Activated CD8-positive, alpha-beta T cell treated with anti-CD3 and anti-CD28 coated beads, Interleukin-2, amount 10 ng/mL, durations not matched to agents 7 days and 5 days (primary cell): ENCODE measurements at regions of chr2 and their contacts with region 1.

Region 1: DNA sequence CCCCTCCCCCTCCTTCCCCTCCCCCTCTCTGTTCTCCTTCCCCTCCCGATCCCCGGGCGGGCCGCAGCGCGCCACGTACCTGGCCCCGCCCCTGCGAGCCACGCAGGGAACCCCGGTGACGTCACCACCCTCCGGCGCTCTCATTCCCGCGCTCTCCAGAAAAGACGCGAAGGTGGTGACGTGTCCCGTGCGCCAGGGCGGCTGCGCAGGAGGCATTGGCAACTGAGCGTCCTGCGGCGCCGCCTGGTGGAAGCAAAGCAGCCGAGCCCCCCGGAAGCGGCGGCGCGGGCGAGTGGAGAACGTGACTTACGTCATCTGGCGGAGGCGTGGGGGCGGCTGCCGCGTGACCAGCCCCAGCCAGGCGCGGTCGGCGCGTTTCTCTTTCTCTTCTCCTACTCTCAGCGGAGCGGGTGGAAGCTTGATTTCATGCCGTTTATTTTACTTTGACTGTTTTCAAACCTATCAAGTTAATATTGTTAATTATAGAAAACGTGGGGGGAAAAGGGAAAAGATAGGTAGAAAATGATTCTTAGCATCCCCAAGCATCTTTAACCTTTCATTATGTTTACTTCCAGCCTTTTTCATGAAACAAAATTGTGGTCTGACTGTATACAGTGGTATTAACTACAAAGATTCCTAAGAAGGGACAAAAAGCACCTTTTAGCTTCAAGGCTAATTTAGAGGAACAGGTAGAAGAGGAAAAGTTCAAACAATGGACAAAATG is 48.1 kb downstream of the C2orf42 start:
- DNase-seq: peak; percentile 100
- ATAC-seq: peak; percentile 74
- H3K4me3 Mint-ChIP-seq: peak overlapping the region; percentile 84
- H3K27ac Mint-ChIP-seq: peak overlapping the region; percentile 96
- H3K4me1 Mint-ChIP-seq: peaks cover 76% of the 10 kb centered on the region
- H3K27me3 Mint-ChIP-seq: no peaks in the 10 kb centered on the region

Region 2: DNA sequence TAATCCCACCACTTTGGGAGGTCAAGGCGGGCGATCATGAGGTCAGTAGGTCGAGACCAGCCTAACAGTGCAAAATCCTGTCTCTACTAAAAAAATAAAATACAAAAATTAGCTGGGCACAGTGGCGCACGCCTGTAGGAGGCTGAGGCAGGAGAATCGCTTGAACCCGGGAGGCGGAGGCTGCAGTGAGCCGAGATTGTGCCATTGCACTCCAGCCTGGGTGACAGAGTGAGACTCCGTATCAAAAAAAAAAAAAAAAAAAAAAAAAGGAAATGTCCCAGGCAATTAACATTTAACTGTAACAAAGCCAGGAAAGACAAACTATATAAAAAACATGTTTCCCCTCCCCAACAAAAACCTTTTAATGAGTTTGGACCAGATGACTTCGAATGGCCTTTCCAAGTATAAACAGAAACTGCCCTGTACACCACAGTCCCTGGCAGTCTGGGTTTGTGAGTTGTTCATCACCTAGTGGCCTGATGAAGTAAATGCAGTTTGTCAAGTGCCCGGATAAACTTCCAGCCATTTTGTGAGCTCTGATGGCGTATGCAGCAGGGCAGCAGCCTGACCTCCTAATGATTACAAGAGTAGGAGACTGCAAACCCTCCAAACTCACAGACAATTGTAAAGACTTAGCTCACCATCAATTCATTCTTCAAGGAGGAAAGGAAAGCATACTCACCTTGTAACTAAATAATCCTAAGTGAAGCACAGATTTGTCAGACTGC is 72.0 kb before region 1 on chr2:
- CTCF ChIA-PET with region 1: interaction called, 62 read pairs
- POLR2A ChIA-PET with region 1: interaction called, 15 read pairs
- DNase-seq: peak; percentile 81
- ATAC-seq: peak; percentile 80
- H3K4me3 Mint-ChIP-seq: peak overlapping the region; percentile 57
- H3K27ac Mint-ChIP-seq: peak overlapping the region; percentile 87
- H3K4me1 Mint-ChIP-seq: peaks cover 47% of the 10 kb centered on the region
- H3K27me3 Mint-ChIP-seq: no peaks in the 10 kb centered on the region

Region 3: DNA sequence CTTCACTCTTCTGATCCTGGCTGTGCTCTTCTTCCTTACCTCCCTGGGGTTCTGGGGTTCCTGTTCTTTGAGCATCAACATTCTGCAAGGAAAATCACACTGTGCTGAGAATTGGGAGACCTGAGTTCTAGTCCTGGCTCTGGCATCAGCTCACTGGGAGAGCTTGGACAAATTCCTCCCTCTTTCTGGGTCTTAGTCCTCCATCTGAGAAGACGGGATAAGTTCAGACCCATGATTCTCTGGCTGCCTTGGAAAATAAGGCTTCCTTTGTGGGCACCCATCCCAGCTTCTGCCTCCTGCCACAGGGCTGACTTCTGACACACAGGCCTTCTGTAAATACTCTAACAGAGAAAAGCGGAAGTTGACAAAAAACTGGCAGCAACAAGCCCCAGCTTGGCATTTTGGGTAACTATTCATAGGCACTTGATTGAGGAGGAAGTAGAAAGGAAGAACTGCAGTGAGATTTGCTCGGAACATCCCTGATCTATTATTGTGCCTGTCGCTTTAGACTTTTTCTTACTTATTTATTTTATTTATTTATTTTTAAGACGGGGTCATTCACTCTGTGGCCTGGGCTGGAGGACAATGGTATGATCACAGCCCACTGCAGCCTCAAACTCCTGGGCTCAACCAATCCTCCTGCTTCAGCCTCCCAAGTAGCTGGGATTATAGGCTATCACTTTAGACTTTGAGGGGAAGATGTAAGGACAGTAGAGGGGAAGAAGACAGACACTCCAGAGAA is 47.6 kb before region 1 on chr2:
- CTCF ChIA-PET with region 1: interaction called, 14 read pairs
- POLR2A ChIA-PET with region 1: interaction called, 370 read pairs
- DNase-seq: peak; percentile 74
- ATAC-seq: peak; percentile 72
- H3K4me3 Mint-ChIP-seq: peak overlapping the region; percentile 70
- H3K27ac Mint-ChIP-seq: peak overlapping the region; percentile 84
- H3K4me1 Mint-ChIP-seq: peaks cover 56% of the 10 kb centered on the region
- H3K27me3 Mint-ChIP-seq: no peaks in the 10 kb centered on the region

Region 4: GRCh38 chr2:70115646-70116442 is 26.9 kb before region 1 on chr2:
- CTCF ChIA-PET with region 1: no interaction called
- POLR2A ChIA-PET with region 1: interaction called, 12 read pairs
- DNase-seq: peak; percentile 37
- ATAC-seq: peak; percentile 35
- H3K4me3 Mint-ChIP-seq: peak overlapping the region; percentile 22
- H3K27ac Mint-ChIP-seq: peak overlapping the region; percentile 69
- H3K4me1 Mint-ChIP-seq: peaks cover 58% of the 10 kb centered on the region
- H3K27me3 Mint-ChIP-seq: no peaks in the 10 kb centered on the region

Region 5: GRCh38 chr2:70132244-70133126 is 10.3 kb before region 1 on chr2:
- CTCF ChIA-PET with region 1: interaction called, 28 read pairs
- POLR2A ChIA-PET with region 1: interaction called, 41 read pairs
- DNase-seq: peak; percentile 65
- ATAC-seq: peak; percentile 43
- H3K4me3 Mint-ChIP-seq: peak overlapping the region; percentile 84
- H3K27ac Mint-ChIP-seq: peak overlapping the region; percentile 98
- H3K4me1 Mint-ChIP-seq: peaks cover 79% of the 10 kb centered on the region
- H3K27me3 Mint-ChIP-seq: no peaks in the 10 kb centered on the region

Region 6: DNA sequence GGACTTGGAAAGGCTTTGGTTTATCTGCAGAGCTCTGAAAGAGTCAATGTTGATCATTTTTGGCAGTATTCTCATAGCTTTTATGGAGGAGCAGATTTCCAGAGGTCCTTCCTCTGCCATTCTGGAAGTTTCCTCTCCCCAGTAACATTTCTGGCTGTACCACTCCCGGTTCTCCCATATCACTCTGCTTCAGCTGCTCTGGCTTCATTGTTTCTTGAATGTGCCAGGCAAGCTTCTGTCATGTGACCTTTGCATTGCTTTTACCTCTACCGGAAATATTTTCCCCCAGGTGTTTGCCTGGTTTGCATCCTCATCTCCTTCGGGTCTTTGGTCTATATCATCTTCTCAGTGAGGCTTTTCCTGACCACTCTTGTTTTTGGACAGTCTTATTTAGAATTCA is 127.6 kb after region 1 on chr2:
- CTCF ChIA-PET with region 1: no interaction called
- POLR2A ChIA-PET with region 1: no interaction called
- DNase-seq: no peak
- ATAC-seq: no peak
- H3K4me3 Mint-ChIP-seq: no peak overlapping the region
- H3K27ac Mint-ChIP-seq: no peak overlapping the region
- H3K4me1 Mint-ChIP-seq: peaks cover 7% of the 10 kb centered on the region
- H3K27me3 Mint-ChIP-seq: no peaks in the 10 kb centered on the region